HAP-1 (cell line): ENCODE measurements at regions of chr18 and their contacts with region 1.

Region 1: GRCh38 chr18:8177330-8178016 is 431.8 kb upstream of the RAB12 start:
- DNase-seq: no peak
- H3K4me3 ChIP-seq: no peak overlapping the region
- H3K4me1 ChIP-seq: no peaks in the 10 kb centered on the region
- H3K27me3 ChIP-seq: no peaks in the 10 kb centered on the region

Region 2: GRCh38 chr18:8116346-8117005 is 61.0 kb before region 1 on chr18:
- in situ Hi-C with region 1: loop called (anchors 10 kb)
- DNase-seq: no peak
- H3K4me3 ChIP-seq: no peak overlapping the region
- H3K4me1 ChIP-seq: no peaks in the 10 kb centered on the region
- H3K27me3 ChIP-seq: no peaks in the 10 kb centered on the region